ENCODE measurements at regions of chr2 and their contacts with region 1.

Region 1: GRCh38 chr2:120109186-120110061 is 96.5 kb downstream of the EPB41L5 start:
- DNase-seq: no peak

Region 2: GRCh38 chr2:119921825-119922224 is 187.6 kb before region 1 on chr2:
- intact Hi-C with region 1: no loop called
- DNase-seq: no peak

Region 3: GRCh38 chr2:120203251-120204021 is 94.0 kb after region 1 on chr2:
- intact Hi-C with region 1: no loop called
- DNase-seq: peak in 1 of 10 donors; percentile 79

Region 4: GRCh38 chr2:120252225-120253021 is 143.0 kb after region 1 on chr2 and contains the start of gene RALB:
- intact Hi-C with region 1: no loop called
- DNase-seq: peak; percentile 98 to 100 (median 100)

Region 5: GRCh38 chr2:120312861-120313694 is 203.7 kb after region 1 on chr2:
- intact Hi-C with region 1: loop called (anchors 2 kb)
- DNase-seq: peak; percentile 71 to 97 (median 86)

Region 6: DNA sequence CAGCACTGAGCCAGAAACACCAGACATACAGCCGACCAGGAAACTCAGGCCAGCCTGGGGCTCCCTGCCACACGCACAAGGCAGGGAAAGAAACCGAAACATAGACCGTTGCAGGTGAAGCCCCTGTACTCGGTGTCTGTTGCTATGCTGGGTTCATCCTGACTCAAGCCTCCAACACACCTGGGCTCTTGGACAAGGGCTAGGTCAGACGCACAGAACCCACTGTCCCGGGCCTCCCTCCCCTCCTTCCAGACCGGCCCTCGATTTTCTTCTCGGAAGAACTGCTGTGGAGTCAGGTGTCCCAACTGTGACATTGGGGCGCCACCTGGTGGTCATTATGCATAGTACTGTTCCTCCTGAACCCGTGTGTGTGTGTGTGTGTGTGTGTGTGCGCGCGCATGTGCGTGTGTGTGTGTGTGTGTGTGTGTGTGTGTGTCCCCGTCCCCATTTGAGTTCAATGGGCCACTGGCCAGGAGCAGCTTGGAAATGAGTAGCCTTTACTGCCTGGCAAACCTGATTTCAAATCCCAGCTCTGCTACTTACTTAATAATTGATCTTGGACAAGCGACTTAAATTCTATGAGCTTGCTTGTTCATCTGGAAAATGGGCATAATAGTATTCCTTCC is 570.8 kb after region 1 on chr2:
- intact Hi-C with region 1: loop called (anchors 5 kb)
- DNase-seq: peak; percentile 61 to 97 (median 86)

Measured in posterior cingulate gyrus (tissue), 11 donors.